Heart right ventricle (tissue), 16 donors: ENCODE measurements at regions of chr7 and their contacts with region 1.

Region 1: DNA sequence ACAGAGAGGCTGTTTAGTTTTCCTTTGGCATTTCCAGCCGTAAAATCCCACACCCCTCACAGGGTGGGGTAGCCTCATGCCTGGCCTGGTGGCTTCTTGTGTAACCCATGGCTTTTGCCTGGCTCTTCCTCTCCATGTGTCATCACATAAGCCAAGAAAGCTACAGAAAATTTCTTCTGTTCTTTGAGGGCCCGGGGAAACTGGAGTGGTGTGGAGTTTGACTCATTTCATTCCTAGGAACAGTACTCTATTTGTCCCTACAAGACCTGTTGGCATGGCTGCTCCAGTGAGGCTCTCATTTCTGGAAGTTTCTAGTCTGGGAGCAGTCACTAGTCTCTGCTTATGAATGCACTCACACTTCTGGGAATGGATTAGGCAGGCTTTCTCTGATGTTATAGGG is 523.9 kb downstream of the SUGCT start:
- DNase-seq: no peak
- ATAC-seq: peak in 2 of 8 donors; percentile 31 to 32
- H3K4me3 ChIP-seq: no peak overlapping the region
- H3K27ac ChIP-seq: no peak overlapping the region
- H3K4me1 ChIP-seq: peaks cover 0 to 11% (median 0%) of the 10 kb centered on the region in 9 donors
- H3K27me3 ChIP-seq: no peaks in the 10 kb centered on the region
- CTCF ChIP-seq: no peak

Region 2: DNA sequence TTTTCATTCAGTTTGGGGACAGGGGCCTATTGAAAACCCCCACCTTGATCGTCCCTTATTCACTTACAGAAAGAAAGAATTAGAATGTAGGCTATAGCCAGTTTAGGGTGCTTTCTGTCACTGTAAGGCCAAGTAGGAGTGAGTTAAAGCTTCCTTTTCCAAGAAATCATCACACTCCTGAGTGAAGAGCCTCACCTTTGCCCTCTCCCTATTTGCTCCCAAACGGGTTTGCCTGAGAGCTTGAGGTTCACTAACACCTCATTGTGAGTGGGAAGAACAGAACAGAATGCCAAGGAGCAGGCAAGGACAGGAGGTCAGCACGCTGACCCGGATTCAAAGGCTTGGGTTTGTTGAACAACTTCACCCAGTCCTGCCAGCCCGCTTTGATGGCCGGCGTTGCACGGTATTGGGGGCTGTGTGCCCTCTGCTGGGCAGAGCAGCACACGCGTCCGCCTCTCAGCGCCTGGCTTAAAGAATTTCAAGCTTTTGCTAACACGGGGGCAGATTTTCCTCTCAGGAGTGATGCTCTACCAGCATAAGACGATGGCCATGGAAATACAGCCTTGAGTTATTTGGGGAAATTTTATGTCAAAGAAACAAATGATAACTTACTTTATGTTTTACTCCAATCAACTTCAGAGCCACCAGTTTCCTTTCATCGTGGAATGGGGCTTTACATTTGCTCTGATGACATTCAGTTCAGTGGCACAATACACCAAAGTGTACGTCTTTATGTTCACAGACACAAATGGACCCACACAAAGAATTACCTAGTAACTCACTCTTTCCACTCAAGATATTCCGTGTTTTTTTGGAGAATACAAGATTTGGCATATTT is 53.9 kb before region 1 on chr7:
- intact Hi-C with region 1: loop called in 1 of 10 experiments (anchors 2 kb)
- DNase-seq: peak; percentile 21 to 45
- ATAC-seq: peak; percentile 67 to 90 (median 74)
- H3K4me3 ChIP-seq: no peak overlapping the region
- H3K27ac ChIP-seq: no peak overlapping the region
- H3K4me1 ChIP-seq: peaks cover 0 to 7% (median 0%) of the 10 kb centered on the region in 9 donors
- H3K27me3 ChIP-seq: no peaks in the 10 kb centered on the region
- CTCF ChIP-seq: peak; percentile 32 to 75 (median 63)